Calu3 (cell line): ENCODE measurements at regions of chr22 and their contacts with region 1.

Region 1: DNA sequence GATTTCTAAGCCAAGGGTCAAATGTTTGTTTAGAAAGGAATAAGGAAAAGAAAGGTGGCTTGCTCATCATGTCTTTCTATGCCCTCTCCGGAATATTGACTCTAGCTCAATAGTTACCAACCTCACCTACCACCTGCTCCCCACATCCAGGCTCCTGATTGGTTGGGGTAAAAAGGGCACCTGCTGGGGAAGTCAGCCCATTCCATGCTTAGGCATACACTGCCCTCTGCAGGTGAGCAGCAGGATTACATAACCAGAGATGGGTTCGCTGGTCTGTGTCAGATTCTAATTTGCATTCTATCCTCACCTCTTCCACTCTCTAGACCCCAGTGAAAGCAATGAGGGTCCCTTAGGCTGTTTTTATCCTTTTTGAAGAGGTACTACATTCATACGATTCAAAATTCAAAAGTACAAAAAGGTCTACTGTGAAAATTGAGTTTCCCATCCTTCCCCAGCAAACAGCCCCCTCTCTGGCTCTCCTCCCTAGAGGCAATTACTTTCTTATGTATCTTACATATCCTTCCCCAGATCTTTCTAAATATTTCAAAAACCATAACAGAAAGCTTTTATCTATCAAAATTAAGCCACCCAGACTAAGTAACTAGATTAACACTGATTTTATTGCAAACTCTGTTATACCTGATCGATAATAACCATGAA is 98.0 kb upstream of the ASPHD2 start:
- DNase-seq: peak; percentile 81
- H3K4me3 Mint-ChIP-seq: no peak overlapping the region
- H3K27ac Mint-ChIP-seq: no peak overlapping the region
- H3K4me1 Mint-ChIP-seq: peaks cover 9% of the 10 kb centered on the region
- H3K27me3 Mint-ChIP-seq: peaks cover 88% of the 10 kb centered on the region
- CTCF ChIP-seq: peak; percentile 91

Region 2: DNA sequence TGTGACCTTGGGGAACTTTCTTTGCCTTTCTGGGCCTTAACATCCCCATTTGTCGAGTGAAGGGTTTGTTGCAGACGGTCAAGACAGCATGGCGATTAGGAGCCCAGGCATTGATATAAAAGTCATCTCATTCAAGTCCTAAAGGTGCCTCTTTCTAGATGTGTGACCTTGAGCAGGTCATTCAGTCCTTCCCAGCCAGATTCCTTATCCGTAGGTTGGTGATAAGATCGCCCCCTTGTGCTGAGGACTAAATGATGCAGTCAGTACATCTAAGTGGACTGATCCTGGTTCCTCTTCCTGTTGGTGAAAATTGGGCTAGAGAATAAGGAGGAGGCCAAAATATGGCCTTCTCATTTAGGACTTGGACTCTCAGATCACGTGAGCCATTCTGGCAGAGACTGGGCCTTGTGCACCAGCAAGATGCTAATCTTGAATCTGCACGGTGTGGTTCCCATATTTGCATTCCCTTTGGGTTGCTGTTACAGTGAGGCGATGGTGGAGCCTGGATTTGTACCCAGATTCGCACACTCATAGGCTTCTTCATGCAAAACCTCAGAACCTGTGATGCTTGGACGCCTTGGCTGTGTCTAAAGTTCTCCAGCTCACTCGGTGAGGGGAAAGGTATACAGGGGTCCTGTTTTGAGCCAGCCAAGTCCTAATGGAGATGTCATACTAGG is 432.3 kb before region 1 on chr22:
- CTCF ChIA-PET with region 1: interaction called, 4 read pairs
- intact Hi-C with region 1: loop called (anchors 5 kb)
- DNase-seq: no peak
- H3K4me3 Mint-ChIP-seq: no peak overlapping the region
- H3K27ac Mint-ChIP-seq: no peak overlapping the region
- H3K4me1 Mint-ChIP-seq: no peaks in the 10 kb centered on the region
- H3K27me3 Mint-ChIP-seq: peaks cover 68% of the 10 kb centered on the region
- CTCF ChIP-seq: no peak

Region 3: DNA sequence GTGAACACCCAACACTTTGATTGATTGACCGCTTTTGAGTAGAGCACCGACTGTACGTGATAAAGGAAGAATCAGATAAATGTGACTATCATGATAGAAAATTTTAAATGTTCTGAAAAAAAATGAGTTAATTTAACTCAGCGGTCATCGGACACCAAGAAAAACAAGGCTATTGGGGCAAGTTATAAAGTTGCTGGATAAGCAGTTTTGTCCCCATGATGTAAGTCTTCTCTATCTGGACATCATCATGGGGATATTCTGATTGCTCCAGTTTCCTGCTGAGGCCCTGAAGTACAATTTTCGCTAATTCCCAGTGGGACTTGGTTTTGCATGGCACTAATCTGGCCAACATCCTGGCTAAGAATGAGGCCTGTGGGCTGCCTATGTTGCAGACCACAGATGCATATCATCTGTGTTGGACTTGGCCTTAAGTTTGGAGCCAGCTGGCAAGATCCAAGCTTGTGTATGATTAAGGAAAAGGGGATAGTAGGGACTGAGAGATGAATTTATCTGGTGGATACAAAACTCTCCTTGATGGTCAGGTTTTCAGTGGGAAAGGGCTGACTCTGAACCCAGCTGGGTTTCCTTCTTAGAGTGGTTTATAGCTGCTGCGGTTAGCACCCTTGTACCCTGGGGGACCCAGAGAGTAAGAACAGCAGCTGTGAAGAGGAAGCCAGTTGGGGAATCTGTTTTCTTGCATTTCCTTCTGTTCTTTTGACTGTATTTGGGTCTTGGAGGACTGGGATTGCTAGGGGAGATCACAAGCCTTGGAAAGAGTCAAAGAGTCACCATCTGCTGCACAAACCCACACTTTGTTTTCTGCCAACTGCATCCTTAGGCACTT is 43.5 kb before region 1 on chr22:
- CTCF ChIA-PET with region 1: no interaction called
- intact Hi-C with region 1: no loop called
- DNase-seq: no peak
- H3K4me3 Mint-ChIP-seq: no peak overlapping the region
- H3K27ac Mint-ChIP-seq: no peak overlapping the region
- H3K4me1 Mint-ChIP-seq: no peaks in the 10 kb centered on the region
- H3K27me3 Mint-ChIP-seq: peaks cover 88% of the 10 kb centered on the region
- CTCF ChIP-seq: no peak